Spleen (tissue), 13 donors: ENCODE measurements at regions of chr6 and their contacts with region 1.

Region 1: DNA sequence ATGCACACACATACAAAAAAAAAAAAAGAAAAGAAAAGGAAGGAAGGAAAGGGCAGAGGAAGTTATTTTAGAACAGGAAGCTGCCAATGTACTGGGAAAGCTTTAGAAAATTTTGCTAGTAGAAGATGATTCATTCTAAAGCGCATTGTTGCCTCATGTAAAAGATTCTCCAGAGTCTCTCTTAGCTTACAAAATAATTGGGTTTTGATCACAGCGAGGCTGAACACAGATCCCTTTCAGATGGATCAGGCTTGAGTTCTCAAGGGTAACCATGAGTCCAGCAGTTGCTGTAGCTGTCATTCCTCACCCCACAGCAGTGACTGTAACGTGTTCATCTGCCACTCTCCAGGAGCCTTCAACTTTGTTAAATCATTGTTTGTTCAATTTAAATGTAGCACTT is 81.9 kb downstream of the PHACTR2 start:
- DNase-seq: no peak
- H3K4me3 ChIP-seq: no peak overlapping the region
- H3K27ac ChIP-seq: peak overlapping the region in 5 of 8 donors; percentile 55 to 78 (median 61)
- H3K4me1 ChIP-seq: peaks cover 0 to 21% (median 7%) of the 10 kb centered on the region in 6 donors
- H3K27me3 ChIP-seq: no peaks in the 10 kb centered on the region
- CTCF ChIP-seq: no peak
- POLR2A ChIP-seq: no peak

Region 2: DNA sequence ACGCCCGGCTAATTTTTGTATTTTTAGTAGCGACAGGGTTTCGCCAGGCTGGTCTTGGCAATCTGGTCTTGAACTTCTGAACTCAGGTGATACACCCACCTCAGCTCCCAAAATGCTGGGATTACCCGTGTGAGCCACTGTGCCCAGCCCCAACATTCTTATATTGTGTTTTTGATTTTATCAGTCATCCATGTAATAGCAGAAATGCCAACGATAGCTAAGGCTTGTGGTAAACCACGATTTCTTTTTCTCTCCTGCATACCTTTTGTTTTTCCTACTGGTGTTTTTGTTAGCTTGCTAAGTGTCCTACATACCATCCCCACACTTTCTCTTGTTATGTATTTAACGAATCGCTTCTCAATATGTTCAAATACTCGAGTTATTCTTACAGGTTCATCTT is 69.8 kb before region 1 on chr6:
- intact Hi-C with region 1: loop called (anchors 10 kb)
- DNase-seq: no peak
- H3K4me3 ChIP-seq: no peak overlapping the region
- H3K27ac ChIP-seq: no peak overlapping the region
- H3K4me1 ChIP-seq: peaks cover 0 to 57% (median 24%) of the 10 kb centered on the region in 6 donors
- H3K27me3 ChIP-seq: no peaks in the 10 kb centered on the region
- CTCF ChIP-seq: no peak
- POLR2A ChIP-seq: no peak